ENCODE measurements at regions of chr1 and their contacts with region 1.

Region 1: GRCh38 chr1:145978854-145979759 is 14.6 kb downstream of the POLR3GL start:
- DNase-seq: peak; percentile 90
- ATAC-seq: peak; percentile 85

Region 2: GRCh38 chr1:146012737-146013403 is 33.8 kb after region 1 on chr1:
- intact Hi-C with region 1: loop called (anchors 5 kb)
- DNase-seq: no peak
- ATAC-seq: peak; percentile 29

Measured in left ventricle myocardium superior (tissue), 1 donor.